ENCODE measurements at regions of chr6 and their contacts with region 1.

Region 1: GRCh38 chr6:106223300-106223930 is 102.1 kb downstream of the ATG5 start:
- H3K4me3 ChIP-seq: no peak overlapping the region
- H3K27ac ChIP-seq: no peak overlapping the region
- H3K4me1 ChIP-seq: no peaks in the 10 kb centered on the region
- CTCF ChIP-seq: peak; percentile 25; the same call in 1 of the 2 replicates

Region 2: GRCh38 chr6:105484238-105485161 is 738.9 kb before region 1 on chr6:
- CTCF ChIA-PET with region 1: interaction called, 25 read pairs
- POLR2A ChIA-PET with region 1: no interaction called
- H3K4me3 ChIP-seq: no peak overlapping the region
- H3K27ac ChIP-seq: no peak overlapping the region
- H3K4me1 ChIP-seq: peaks cover 16% of the 10 kb centered on the region
- CTCF ChIP-seq: peak; percentile 50; the same call in 1 of the 2 replicates

Region 3: DNA sequence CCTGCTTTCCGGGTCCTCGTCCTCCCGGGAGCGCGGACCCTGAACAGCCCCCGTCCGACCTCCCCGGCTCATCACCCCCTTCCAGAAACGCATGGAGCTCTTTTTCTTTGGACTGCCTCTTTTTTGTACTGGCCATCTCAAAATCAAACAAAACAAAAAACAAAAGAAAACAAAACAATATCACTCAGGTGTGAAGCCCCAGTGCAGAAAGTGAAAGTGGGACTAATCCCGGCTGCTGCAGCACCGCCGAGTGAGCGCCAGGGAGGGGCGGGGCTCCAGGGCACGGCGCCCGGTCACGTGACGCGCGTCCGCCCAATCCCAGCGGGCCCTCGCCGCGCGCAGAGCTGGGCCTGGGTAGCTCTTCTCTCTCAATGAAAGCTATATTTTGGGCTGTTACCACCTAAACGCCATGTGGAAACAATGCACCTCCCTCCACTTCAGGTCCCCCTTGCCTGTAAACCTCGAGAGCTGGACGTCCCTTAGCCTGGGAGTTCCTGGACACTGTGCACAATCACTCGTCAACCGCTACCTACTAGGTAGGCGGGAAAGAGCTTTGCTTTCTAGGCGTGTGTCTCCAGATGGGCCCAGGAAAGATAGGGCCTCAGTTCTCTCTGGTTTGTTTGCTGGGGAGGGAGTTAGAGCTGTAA is 231.0 kb before region 1 on chr6:
- CTCF ChIA-PET with region 1: interaction called, 16 read pairs
- POLR2A ChIA-PET with region 1: no interaction called
- H3K4me3 ChIP-seq: peak overlapping the region; percentile 66
- H3K27ac ChIP-seq: peak overlapping the region; percentile 28; the same call in 1 of the 2 replicates
- H3K4me1 ChIP-seq: no peaks in the 10 kb centered on the region
- CTCF ChIP-seq: no peak

Region 4: DNA sequence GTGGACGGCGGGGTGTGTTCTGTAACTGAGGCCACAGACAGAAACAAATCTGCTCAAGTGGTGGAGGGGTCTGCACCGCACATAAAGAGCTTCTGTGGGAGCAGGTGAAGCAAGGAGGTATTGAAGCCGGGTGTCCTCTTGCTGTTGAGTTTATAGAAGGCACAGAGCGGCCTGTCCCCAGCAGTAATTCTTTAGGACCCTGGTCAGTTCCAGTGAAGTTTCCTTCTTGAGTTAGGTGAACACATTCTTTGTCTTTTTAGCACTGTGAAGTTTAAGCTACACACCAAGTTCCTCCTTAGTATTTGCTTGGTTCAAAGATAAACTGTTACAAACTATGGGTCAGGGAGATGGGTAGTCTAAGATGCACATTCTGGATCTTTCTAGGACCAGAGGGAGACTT is 131.1 kb before region 1 on chr6:
- CTCF ChIA-PET with region 1: interaction called, 32 read pairs
- POLR2A ChIA-PET with region 1: no interaction called
- H3K4me3 ChIP-seq: no peak overlapping the region
- H3K27ac ChIP-seq: no peak overlapping the region
- H3K4me1 ChIP-seq: no peaks in the 10 kb centered on the region
- CTCF ChIP-seq: no peak

Region 5: GRCh38 chr6:106162921-106163320 is 60.5 kb before region 1 on chr6:
- CTCF ChIA-PET with region 1: no interaction called
- POLR2A ChIA-PET with region 1: no interaction called
- H3K4me3 ChIP-seq: no peak overlapping the region
- H3K27ac ChIP-seq: no peak overlapping the region
- H3K4me1 ChIP-seq: no peaks in the 10 kb centered on the region
- CTCF ChIP-seq: no peak

Region 6: DNA sequence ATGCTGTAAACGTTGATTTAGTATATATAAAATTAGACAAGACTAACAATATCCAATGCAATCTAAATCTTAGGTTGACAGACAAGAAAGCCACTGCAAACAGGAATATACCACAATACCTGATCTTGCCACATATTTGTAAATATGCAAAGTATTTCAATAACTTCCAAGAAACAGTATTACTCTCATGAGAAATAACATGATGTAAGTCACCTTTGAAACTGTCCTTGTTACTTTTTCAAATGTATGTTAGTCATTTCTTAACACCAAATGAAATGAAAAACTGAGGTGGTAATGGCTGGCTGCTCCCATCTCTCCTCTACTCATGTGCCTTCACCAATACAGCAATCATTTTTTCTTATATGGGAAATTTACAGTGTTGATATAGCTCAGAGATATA is 16.5 kb before region 1 on chr6:
- CTCF ChIA-PET with region 1: interaction called, 20 read pairs
- POLR2A ChIA-PET with region 1: no interaction called
- H3K4me3 ChIP-seq: no peak overlapping the region
- H3K27ac ChIP-seq: no peak overlapping the region
- H3K4me1 ChIP-seq: no peaks in the 10 kb centered on the region
- CTCF ChIP-seq: no peak

Region 7: DNA sequence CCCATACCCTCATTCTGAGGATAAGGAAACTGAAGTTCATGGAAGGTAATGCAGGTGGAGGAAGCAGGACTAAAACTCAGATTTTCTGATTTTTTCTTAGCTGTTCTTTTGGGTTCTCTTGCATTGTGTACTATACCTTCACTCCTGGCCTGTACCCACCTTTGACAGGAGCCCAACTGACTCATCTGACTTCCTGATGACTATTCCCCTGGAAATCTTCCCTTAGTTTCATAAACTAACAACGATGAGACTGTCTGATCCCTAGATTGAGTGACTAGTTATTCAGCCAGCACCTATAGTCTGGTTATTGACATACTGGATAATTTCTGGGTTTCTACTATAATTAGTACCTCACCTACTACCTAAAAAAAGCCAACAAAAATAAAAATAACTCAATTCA is 147.2 kb after region 1 on chr6:
- CTCF ChIA-PET with region 1: no interaction called
- POLR2A ChIA-PET with region 1: no interaction called
- H3K4me3 ChIP-seq: no peak overlapping the region
- H3K27ac ChIP-seq: no peak overlapping the region
- H3K4me1 ChIP-seq: no peaks in the 10 kb centered on the region
- CTCF ChIP-seq: no peak

Region 8: DNA sequence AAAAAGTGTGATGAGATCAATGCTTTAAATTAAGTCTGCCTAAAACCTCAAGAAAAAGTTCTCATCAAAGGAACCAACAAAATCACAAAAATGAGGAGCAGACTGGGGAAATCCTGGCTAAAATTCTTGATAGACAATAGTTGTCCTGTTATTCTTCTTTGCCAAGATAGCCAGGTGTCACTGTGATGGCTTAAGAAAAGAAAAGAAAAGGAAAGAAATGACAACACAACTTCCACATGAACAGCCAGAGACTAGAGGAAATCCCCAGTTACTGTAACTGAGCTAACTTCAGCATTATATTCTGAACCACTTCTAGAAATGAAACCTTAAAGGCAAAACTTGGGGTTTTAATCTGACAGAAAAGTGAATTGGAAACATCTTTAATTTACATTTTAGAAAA is 621.5 kb after region 1 on chr6:
- CTCF ChIA-PET with region 1: no interaction called
- POLR2A ChIA-PET with region 1: no interaction called
- H3K4me3 ChIP-seq: no peak overlapping the region
- H3K27ac ChIP-seq: no peak overlapping the region
- H3K4me1 ChIP-seq: no peaks in the 10 kb centered on the region
- CTCF ChIP-seq: no peak